Right ventricle myocardium inferior (tissue), 1 donor: ENCODE measurements at regions of chr1 and their contacts with region 1.

Region 1: GRCh38 chr1:233722212-233722979 is 108.5 kb downstream of the KCNK1 start:
- DNase-seq: no peak
- ATAC-seq: peak; percentile 51

Region 2: GRCh38 chr1:233665575-233666270 is 56.7 kb before region 1 on chr1:
- intact Hi-C with region 1: loop called (anchors 1 kb)
- DNase-seq: no peak
- ATAC-seq: peak; percentile 84

Region 3: DNA sequence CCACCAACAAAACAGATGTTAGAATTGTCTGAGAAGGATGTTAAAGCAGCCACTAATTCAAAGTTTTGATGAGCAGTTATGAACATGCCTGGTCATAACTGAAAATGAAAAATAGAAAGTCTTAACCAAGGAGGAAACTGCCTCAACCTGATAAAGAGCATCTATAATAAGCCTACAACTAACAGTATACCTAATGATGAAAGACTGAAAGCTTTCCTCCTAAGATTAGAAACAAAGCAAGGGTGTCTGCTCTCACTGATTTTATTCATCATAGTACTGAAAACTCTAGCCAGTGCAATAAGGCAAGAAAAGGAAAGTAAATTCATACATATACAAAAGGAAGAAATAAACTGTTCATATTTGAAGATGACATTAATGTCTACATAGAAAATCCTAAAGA is 26.5 kb before region 1 on chr1:
- intact Hi-C with region 1: loop called (anchors 2 kb)
- DNase-seq: no peak
- ATAC-seq: no peak